ENCODE measurements at regions of chr7 and their contacts with region 1.

Region 1: DNA sequence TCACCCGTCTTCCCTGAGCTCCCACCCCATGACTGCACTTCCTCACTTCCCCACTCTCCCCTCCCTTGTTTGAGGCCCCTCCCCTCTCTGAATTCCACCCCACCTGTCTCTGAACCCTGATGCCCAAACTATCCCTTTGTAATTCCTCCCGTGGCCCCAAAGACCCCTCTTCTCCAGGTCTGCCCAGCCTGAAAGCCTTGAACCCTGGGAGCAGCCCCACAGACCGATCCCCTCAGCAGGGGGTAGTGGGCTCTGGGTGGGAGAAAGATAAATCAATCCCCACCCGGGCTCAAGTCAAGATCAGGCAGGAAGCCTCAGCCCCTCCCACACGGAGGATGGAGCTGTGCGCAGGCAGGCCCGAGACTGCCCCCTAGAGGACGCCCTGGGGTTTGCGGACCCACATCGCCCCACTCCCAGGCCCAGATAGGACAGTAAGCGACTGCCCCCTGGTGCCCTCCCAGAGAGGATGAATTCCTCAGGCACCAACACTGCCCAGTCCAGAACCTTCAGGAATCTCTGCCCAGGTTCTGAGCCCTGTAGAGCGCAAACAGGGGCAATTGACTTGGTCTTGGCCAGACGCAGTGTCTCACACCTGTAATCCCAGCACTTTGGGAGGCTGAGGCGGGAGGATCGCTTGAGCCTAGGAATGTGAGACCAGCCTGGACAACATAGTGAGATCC is 11.7 kb downstream of the HSPB1 start:
- DNase-seq: peak; percentile 94 to 99 (median 98)
- H3K4me3 ChIP-seq: no peak overlapping the region
- H3K27ac ChIP-seq: peak overlapping the region in 1 of 5 donors; percentile 57
- H3K4me1 ChIP-seq: peaks cover 8 to 21% of the 10 kb centered on the region in 2 donors
- H3K27me3 ChIP-seq: no peaks in the 10 kb centered on the region
- CTCF ChIP-seq: peak; percentile 100
- POLR2A ChIP-seq: peak; percentile 15 to 54

Region 2: DNA sequence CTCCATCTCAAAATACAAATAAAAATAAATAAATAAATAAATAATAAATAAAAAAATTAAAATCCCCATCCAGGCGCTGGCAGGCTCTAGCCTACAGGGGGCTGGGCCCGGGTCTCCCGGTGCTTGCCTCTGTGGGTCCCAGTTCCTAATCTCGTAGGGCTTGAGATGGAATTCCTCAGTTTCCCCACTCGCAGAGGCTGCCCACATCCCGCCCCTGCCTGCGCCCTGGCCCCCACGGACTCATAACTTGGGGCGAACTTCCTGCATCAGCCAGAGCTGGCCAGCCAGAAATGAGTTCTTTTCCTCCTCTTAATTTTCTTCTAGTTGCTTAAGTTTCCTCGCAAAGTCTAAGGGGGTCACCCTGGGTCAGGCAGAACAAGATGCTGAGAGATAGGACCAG is 134.5 kb before region 1 on chr7:
- intact Hi-C with region 1: loop called (anchors 2 kb)
- DNase-seq: no peak
- H3K4me3 ChIP-seq: no peak overlapping the region
- H3K27ac ChIP-seq: no peak overlapping the region
- H3K4me1 ChIP-seq: peaks cover 0 to 3% of the 10 kb centered on the region in 2 donors
- H3K27me3 ChIP-seq: no peaks in the 10 kb centered on the region
- CTCF ChIP-seq: no peak
- POLR2A ChIP-seq: no peak

Region 3: DNA sequence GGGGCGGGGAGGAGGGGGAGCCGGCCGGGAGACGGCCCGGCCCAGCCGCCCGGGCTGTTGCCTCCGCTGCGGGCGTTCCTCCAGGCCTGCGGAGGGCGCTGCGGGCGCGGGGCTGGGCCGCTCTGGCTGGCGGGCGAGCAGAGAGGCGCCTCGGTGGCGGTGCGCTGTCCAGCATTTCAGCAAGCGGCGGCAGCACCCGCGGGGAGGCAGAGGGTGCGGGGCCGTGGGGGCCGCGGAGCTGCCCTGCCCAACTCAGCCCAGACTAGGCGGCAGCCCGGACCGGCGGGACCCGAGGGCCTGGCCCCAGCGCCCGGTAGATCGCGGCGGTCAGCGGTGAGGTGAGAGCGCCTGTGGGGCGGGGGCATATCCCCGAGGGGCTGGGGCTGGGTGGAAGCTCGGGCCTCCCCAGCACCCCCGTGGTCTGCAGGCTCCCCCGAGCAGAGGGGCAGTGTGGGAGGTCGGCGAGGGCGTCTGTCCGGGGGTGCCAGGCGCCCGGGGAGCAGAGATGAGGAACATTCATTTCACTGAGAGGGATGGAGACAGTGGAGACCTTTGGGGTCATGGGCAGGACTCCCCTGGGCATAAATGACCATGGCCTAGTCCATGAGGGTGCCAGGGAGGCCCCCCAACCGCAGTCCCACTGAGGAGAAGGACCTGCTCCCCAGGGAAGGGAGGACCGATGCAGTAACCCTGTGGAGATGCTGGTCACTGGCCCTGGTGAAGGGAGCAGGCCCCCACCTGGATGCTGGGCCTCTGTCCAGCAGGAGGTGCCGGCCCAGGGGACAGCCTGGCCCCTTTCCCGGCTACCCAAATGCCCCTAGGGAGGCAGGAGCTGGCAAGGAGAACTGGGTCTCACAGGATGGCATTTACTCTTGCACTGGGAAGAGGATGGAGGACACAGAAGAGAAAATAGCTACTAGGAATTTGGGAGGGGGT is 112.2 kb before region 1 on chr7 and contains the start of gene SRRM3:
- intact Hi-C with region 1: no loop called
- DNase-seq: peak; percentile 76 to 87 (median 81)
- H3K4me3 ChIP-seq: peak within 1 kb of the TSS in 1 of 4 donors; percentile 20
- H3K27ac ChIP-seq: peak within 1 kb of the TSS in 1 of 5 donors; percentile 38
- H3K4me1 ChIP-seq: no peaks in the 10 kb centered on the region
- H3K27me3 ChIP-seq: no peaks in the 10 kb centered on the region
- CTCF ChIP-seq: peak in 4 of 6 experiments; percentile 12 to 83 (median 60)
- POLR2A ChIP-seq: no peak
- total RNA-seq, gene SRRM3: 14.3 to 49.3 (median 32.4) TPM

Region 4: DNA sequence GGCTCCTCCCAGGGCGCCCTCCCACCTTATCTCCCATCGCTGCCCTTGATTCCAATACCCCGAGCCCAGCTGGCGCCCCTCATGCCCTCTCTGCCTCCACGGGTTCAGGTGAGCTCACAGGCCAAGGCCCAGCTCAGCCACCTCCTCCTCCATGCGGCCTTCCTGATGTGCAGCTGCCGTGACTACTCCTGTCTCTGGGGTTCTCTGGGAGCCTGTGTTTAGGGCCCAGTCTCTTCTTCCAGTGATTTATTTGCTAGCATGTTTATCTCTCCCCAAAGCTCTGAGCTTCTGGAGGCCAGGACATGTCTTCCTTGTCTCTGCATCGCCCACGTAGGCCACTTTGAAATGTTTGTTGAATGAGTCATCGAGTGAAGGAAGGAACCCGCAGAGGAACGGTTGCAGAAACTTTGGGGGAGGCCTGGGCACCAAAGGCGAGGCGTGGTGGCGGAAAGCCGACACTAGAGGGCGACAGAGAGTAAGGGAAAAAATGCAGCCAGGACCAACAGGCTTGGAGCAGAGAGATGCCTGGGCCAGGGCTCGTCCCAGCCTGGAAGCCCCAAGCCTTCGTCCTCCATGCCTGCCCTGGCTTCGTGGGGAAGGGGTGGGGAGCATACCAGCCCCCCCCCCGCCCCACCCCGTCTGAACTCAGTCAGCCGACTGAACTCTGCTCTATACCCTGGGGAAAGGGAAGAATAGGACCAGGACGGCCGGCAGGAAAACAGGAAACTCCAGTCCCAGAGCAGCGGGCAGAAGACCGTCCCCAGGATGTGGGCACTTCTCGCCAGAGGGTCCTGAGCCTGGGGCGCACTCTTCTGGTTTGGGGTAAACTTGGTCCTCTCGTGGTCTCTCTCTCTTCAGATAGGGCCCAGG is 22.6 kb before region 1 on chr7:
- intact Hi-C with region 1: loop called in 1 of 2 experiments (anchors 2 kb)
- DNase-seq: peak; percentile 90 to 98 (median 94)
- H3K4me3 ChIP-seq: peak overlapping the region in 1 of 4 donors; percentile 8
- H3K27ac ChIP-seq: peak overlapping the region; percentile 17 to 100 (median 89)
- H3K4me1 ChIP-seq: peaks cover 28 to 48% of the 10 kb centered on the region in 2 donors
- H3K27me3 ChIP-seq: no peaks in the 10 kb centered on the region
- CTCF ChIP-seq: peak; percentile 97 to 100 (median 99)
- POLR2A ChIP-seq: peak in 1 of 2 donors; percentile 50

Region 5: GRCh38 chr7:76359111-76359978 is 45.2 kb after region 1 on chr7:
- intact Hi-C with region 1: loop called in 1 of 2 experiments (anchors 2 kb)
- DNase-seq: peak; percentile 97 to 100 (median 99)
- H3K4me3 ChIP-seq: peak overlapping the region in 3 of 4 donors; percentile 50 to 82 (median 76)
- H3K27ac ChIP-seq: peak overlapping the region; percentile 91 to 100 (median 100)
- H3K4me1 ChIP-seq: peaks cover 17 to 46% of the 10 kb centered on the region in 2 donors
- H3K27me3 ChIP-seq: no peaks in the 10 kb centered on the region
- CTCF ChIP-seq: peak; percentile 48 to 91 (median 82)
- POLR2A ChIP-seq: peak in 1 of 2 donors; percentile 31